ENCODE measurements at regions of chr11 and their contacts with region 1.

Region 1: DNA sequence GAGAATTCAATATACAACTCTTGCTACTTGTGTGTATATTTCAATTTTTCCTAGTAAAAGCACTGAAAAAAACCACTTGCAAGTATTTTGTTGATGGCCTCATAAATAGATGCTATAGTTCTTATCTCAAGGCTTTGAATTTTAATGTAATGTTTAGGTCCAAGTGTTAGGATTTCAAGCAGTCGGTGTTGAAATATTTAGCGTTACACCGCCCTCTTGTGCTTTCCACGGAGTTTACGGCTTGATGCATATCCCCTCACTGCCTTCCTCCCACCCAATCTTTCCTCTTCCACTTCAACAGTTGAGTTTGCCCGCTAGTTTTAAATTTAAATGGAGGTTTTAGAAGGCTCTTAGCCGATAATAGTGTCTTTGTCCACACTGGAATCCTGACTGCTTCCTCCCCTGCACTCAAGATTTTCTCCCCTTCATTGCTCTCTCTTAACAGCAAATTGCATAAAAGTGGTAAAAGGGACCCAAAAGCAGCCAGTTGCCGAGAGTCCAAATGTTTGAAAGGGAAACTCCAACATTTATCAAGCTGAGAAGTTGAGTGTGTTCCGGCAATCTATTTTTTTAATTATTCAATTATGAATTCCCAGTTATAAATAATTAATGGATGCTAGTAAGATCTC is 25.9 kb upstream of the HTATIP2 start:
- DNase-seq: peak in 4 of 10 donors; percentile 28 to 60 (median 34)

Region 2: GRCh38 chr11:20243974-20244373 is 93.7 kb before region 1 on chr11:
- intact Hi-C with region 1: loop called (anchors 5 kb)
- DNase-seq: no peak